ENCODE measurements at regions of chr21 and their contacts with region 1.

Region 1: GRCh38 chr21:25801217-25802014 is 66.6 kb downstream of the GABPA start:
- DNase-seq: peak; percentile 92
- H3K4me3 Mint-ChIP-seq: no peak overlapping the region
- H3K27ac Mint-ChIP-seq: no peak overlapping the region
- H3K4me1 Mint-ChIP-seq: peaks cover 5% of the 10 kb centered on the region
- H3K27me3 Mint-ChIP-seq: peaks cover 27% of the 10 kb centered on the region

Region 2: DNA sequence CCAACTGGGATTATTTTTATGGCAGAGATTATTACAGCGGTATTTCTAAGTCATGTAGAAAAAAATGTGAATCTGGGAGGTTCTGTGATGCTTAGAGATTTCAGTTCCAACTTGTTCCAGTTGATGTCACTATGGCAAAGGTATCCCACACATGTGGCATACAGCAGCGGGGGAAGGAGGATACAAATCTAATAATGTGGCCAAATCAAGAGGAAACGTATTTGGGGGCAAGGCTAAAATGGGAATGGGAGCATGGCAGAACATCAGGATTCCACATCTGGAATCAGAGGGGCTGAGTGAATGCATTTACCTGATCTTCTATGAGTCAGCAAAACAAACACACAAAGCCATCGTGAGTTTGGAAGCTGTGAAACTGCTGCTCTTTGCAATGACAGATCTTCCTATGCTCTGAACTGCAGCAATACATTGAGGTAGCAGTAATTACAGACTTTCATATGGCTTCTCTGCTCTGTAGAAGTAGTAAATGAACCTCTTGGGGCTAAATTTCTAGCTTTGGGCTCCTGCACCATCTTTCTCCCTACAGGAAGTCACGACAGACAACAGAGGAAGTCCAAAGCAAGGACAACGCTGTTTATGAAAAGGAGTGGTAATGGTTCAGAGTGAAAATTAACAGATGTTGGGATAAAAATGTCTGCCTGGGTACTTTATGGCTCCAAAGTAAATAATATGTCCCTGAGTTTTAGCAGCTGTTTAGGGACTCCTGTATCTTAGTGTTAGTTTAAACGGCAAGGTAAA is 11.1 kb before region 1 on chr21:
- CTCF ChIA-PET with region 1: interaction called, 15 read pairs
- DNase-seq: no peak
- H3K4me3 Mint-ChIP-seq: peak overlapping the region; percentile 40
- H3K27ac Mint-ChIP-seq: no peak overlapping the region
- H3K4me1 Mint-ChIP-seq: peaks cover 14% of the 10 kb centered on the region
- H3K27me3 Mint-ChIP-seq: peaks cover 2% of the 10 kb centered on the region